Transverse colon (tissue), 4 donors: ENCODE measurements at regions of chr6 and their contacts with region 1.

Region 1: GRCh38 chr6:3592371-3592941 is 135.6 kb upstream of the SLC22A23 start:
- DNase-seq: no peak
- H3K4me3 ChIP-seq: no peak overlapping the region
- H3K27ac ChIP-seq: no peak overlapping the region
- H3K4me1 ChIP-seq: no peaks in the 10 kb centered on the region
- H3K27me3 ChIP-seq: no peaks in the 10 kb centered on the region
- CTCF ChIP-seq: no peak
- EP300 ChIP-seq: no peak
- POLR2A ChIP-seq: no peak

Region 2: DNA sequence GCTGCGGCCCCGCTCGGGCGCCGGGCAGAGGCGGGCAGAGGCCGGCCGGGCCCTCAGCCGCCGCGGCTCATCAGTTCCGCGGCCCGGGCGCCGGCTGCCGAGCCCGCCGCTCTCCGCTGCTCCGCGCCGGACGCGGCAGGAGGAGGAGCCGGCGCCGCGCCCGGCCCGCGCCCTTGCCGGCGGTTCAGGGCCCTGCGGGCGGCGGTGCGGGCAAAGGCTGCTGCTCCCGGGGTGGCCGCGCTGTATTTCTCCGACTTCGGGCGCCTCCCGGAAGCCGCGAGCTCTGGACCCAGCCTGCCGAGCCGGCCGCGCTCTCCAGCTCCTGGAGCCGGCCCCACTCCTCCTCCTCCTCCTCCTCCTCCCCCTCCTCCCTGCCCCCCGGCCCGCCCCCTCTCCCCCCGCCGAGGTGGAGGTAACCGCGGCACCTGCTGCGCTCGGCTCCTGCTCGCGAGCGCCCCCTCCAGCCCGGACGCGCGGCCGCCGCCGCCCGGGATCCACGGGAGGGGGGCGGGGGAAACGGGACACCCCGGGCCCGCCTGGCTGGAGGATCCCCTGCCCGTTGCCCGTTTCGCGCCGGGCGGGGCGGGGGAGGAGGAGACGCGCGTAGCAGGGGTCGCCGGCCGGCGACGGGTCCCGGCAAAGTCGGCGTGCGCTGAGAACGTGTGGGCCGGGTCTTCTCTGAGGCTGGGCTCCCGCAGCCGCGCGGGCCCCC is 135.5 kb before region 1 on chr6 and contains the start of gene SLC22A23:
- in situ Hi-C with region 1: no loop called
- intact Hi-C with region 1: no loop called
- DNase-seq: peak; percentile 85
- H3K4me3 ChIP-seq: peak within 1 kb of the TSS; percentile 51 to 83 (median 73)
- H3K27ac ChIP-seq: peak within 1 kb of the TSS; percentile 81 to 88 (median 88)
- H3K4me1 ChIP-seq: peaks cover 0 to 28% (median 15%) of the 10 kb centered on the region in 4 donors
- H3K27me3 ChIP-seq: peaks cover 5% of the 10 kb centered on the region
- CTCF ChIP-seq: peak; percentile 20 to 90 (median 71)
- EP300 ChIP-seq: no peak
- POLR2A ChIP-seq: peak; percentile 11
- total RNA-seq, gene SLC22A23: 96.1 to 161 (median 117) TPM

Region 3: GRCh38 chr6:3518356-3519225 is 73.9 kb before region 1 on chr6:
- in situ Hi-C with region 1: no loop called
- intact Hi-C with region 1: loop called (anchors 10 kb)
- DNase-seq: peak; percentile 58
- H3K4me3 ChIP-seq: no peak overlapping the region
- H3K27ac ChIP-seq: peak overlapping the region in 1 of 4 donors; percentile 1
- H3K4me1 ChIP-seq: peaks cover 0 to 12% (median 7%) of the 10 kb centered on the region in 4 donors
- H3K27me3 ChIP-seq: no peaks in the 10 kb centered on the region
- CTCF ChIP-seq: no peak
- EP300 ChIP-seq: no peak
- POLR2A ChIP-seq: no peak